ENCODE measurements at regions of chr2 and their contacts with region 1.

Region 1: GRCh38 chr2:180258041-180258537 is 251.0 kb upstream of the CWC22 start:
- DNase-seq: peak in 1 of 2 experiments; percentile 16
- H3K4me3 ChIP-seq: no peak overlapping the region
- H3K4me3 Mint-ChIP-seq: no peak overlapping the region
- H3K27ac Mint-ChIP-seq: no peak overlapping the region
- H3K4me1 ChIP-seq: peaks cover 26% of the 10 kb centered on the region; the same call in 1 of the 2 replicates
- H3K4me1 Mint-ChIP-seq: peaks cover 25% of the 10 kb centered on the region
- H3K27me3 ChIP-seq: no peaks in the 10 kb centered on the region
- H3K27me3 Mint-ChIP-seq: no peaks in the 10 kb centered on the region
- CTCF ChIP-seq: no peak

Region 2: DNA sequence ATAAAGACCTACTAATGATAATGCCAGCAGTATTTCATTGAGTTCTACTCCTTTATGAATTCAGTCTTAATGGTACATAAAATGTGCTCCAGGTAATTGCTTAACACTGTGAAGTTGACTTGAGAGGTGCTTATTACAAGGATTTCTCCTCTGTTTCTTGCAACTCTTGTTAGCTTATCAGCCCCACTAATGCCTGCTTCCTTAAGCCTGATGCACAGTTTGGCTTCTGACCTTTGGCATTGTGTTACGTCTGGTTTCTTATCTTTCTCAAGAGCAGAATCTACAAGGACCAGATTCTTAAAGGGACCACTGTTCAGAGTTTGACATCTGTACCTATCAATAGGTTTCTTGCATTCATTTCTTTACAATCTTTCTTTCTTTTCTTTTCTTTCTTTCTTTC is 27.1 kb before region 1 on chr2:
- CTCF ChIA-PET with region 1: no interaction called
- POLR2A ChIA-PET with region 1: no interaction called
- intact Hi-C with region 1: loop called (anchors 2 kb)
- DNase-seq: peak in 1 of 2 experiments; percentile 12
- H3K4me3 ChIP-seq: no peak overlapping the region
- H3K4me3 Mint-ChIP-seq: no peak overlapping the region
- H3K27ac Mint-ChIP-seq: no peak overlapping the region
- H3K4me1 ChIP-seq: no peaks in the 10 kb centered on the region
- H3K4me1 Mint-ChIP-seq: peaks cover 10% of the 10 kb centered on the region
- H3K27me3 ChIP-seq: no peaks in the 10 kb centered on the region
- H3K27me3 Mint-ChIP-seq: no peaks in the 10 kb centered on the region
- CTCF ChIP-seq: no peak

Region 3: DNA sequence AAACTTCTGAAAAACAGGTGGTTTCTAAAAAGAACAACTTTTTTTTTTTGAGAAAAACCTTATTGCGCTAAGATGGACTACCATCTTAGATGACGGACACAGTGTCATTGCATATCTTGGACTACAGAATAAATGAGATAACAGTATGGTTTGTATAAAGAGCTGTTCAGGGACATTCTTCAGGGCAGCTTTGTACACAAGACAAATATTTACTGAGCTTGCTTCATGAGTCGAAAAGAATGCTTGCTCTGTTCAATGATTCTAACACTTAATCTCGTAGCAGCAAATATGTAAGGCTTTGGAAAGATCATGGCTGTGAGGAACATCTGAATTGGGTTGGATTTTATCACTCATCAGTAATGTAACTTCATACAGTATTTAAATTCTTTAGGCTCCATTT is 31.5 kb after region 1 on chr2:
- CTCF ChIA-PET with region 1: no interaction called
- POLR2A ChIA-PET with region 1: no interaction called
- intact Hi-C with region 1: loop called (anchors 1 kb)
- DNase-seq: peak in 1 of 2 experiments; percentile 54
- H3K4me3 ChIP-seq: no peak overlapping the region
- H3K4me3 Mint-ChIP-seq: no peak overlapping the region
- H3K27ac Mint-ChIP-seq: no peak overlapping the region
- H3K4me1 ChIP-seq: peaks cover 26% of the 10 kb centered on the region
- H3K4me1 Mint-ChIP-seq: no peaks in the 10 kb centered on the region
- H3K27me3 ChIP-seq: no peaks in the 10 kb centered on the region
- H3K27me3 Mint-ChIP-seq: no peaks in the 10 kb centered on the region
- CTCF ChIP-seq: no peak

Measured in Caco-2 (cell line).